Transverse colon (tissue), 4 donors: ENCODE measurements at regions of chr3 and their contacts with region 1.

Region 1: GRCh38 chr3:88101142-88101541 is 42.1 kb downstream of the ZNF654 start:
- DNase-seq: no peak
- H3K4me3 ChIP-seq: no peak overlapping the region
- H3K27ac ChIP-seq: no peak overlapping the region
- H3K4me1 ChIP-seq: no peaks in the 10 kb centered on the region
- H3K27me3 ChIP-seq: no peaks in the 10 kb centered on the region
- CTCF ChIP-seq: no peak
- EP300 ChIP-seq: no peak
- POLR2A ChIP-seq: no peak

Region 2: DNA sequence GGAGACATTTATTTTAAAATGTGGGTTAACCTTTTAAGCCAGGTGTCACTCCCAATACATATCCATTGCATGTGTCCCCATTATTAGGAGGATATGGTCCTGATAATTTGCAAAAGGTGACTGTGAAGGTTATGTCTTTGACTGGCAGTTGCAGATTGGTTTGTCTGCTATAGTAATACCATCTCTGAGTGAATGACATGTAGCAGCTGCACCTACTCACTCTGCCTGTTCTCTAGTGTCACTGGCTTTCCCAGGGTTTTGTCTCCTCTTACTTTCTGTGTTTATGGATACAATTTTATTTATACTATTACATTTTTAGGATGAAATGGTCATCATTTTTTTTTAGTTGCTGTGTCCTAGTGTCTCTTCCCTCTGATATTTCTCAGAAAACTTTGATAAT is 441.8 kb after region 1 on chr3:
- in situ Hi-C with region 1: no loop called
- intact Hi-C with region 1: loop called (anchors 5 kb)
- DNase-seq: no peak
- H3K4me3 ChIP-seq: no peak overlapping the region
- H3K27ac ChIP-seq: no peak overlapping the region
- H3K4me1 ChIP-seq: no peaks in the 10 kb centered on the region
- H3K27me3 ChIP-seq: no peaks in the 10 kb centered on the region
- CTCF ChIP-seq: no peak
- EP300 ChIP-seq: no peak
- POLR2A ChIP-seq: no peak